Posterior vena cava (tissue), 2 donors: ENCODE measurements at regions of chr3 and their contacts with region 1.

Region 1: DNA sequence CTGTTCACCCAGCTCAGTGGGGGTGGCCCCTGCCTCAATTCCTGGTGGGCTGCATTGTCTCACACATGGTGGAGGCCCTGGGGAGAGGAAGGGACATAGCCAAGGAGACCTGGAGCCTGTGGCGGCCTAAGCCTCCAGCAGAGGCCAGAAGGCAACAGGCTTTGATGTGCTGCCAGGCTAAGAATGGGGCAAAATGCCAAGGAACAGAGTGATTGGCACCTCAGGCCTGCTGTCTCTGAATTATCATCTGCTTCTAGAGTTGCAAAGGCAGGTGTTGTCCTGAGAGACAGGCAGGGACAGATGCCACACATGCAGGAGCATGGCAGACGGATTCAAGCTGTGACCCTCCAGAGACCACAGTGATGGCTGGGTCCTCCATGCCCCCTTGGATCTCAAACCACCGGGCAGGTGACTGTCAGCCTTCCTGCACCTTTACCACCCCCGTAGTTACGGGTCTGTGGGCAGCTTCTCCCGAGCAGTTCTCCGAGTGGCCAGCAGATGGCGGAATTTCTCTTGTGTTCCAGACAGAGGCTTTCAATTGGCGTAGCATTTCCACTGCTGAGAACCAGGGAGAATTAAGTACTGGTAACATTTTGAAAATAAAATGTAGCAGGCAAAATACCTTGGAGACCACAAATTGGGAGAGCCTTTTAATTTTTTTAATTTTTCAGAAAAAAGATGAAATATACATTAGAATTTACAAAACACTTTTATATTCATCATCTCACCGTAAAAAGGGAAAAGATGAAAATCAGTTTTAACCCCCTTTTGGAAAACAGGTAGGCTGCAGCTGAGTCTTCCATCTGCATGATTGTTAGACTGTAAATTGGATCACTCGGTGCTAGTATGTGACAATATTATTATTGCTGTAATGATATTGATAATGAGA is 525.5 kb upstream of the CFAP20DC start:
- DNase-seq: peak; percentile 93

Region 2: GRCh38 chr3:59606638-59607262 is 31.4 kb after region 1 on chr3:
- intact Hi-C with region 1: loop called in 1 of 2 experiments (anchors 1 kb)
- DNase-seq: no peak

Region 3: DNA sequence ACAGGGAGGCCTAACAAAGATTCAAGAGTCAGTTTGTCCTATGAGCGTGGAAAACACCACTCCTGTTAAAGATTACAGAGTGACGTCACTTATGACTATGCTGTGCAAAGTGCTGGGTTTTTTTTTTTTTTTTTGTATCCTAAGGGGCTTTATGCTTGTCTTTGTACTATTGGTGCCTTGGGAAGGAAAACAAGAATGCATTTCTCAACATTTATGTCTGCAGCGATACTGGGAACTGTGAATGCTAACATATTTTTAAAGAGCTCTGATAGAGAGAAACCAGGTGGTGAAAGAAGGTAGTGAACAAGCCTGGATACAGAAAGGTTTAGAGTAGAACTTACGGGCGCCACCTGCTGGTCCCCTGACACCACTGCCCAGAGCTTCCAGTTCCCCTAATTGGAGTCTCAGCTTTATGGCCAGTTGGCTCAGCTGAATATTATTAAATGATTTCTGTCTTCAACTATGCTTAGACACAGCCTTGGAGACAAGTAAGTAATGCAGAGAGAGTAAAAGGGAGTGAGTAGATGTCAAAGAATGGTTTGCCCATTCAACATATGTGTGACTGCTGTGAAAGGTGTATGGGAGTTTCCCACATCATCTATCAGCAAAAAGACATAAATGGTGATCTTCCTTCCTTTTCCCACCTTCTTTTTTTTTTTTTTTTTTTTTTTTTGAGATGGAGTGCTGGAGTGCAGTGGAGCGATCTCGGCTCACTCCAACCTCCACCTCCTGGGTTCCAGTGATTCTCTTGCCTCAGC is 282.4 kb after region 1 on chr3:
- intact Hi-C with region 1: loop called (anchors 5 to 10 kb)
- DNase-seq: peak; percentile 93